GM10248 (cell line): ENCODE measurements at regions of chr2 and their contacts with region 1.

Region 1: GRCh38 chr2:208175069-208175839 is 11.9 kb upstream of the CRYGA start:
- DNase-seq: peak; percentile 79
- CTCF ChIP-seq: peak; percentile 86

Region 2: GRCh38 chr2:208153156-208153555 is 22.1 kb before region 1 on chr2:
- CTCF ChIA-PET with region 1: interaction called, 22 read pairs
- POLR2A ChIA-PET with region 1: no interaction called
- DNase-seq: no peak
- CTCF ChIP-seq: no peak

Region 3: GRCh38 chr2:208164951-208165755 is 10.1 kb before region 1 on chr2:
- CTCF ChIA-PET with region 1: interaction called, 17 read pairs
- POLR2A ChIA-PET with region 1: no interaction called
- DNase-seq: no peak
- CTCF ChIP-seq: no peak

Region 4: DNA sequence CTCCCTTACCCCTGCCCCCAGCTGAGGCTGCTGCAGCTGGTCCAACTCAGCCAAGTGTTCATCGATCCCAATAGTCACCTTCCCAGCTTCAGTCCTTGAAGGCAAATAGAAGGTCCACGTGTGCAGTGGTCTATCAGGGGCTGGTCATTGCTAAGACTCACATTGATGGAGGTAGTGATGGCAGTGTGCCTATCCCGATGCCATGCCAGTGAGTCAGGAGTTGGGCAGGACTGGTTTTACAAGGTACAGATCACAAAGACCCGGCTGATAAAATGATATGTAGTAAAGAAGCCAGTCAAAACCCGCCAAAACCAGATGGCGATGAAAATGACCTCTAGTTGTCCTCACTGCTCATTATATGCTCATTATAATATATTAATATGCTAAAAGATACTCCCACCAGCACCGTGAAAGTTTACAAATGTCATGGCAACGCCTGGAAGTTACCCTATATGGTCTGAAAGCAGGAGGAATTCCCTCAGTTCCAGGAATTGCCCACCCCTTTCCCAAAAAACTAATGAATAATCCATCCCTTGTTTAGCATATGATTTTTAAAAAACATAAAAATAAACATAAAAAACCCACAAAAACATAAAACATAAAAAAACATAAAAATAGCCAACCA is 17.5 kb after region 1 on chr2:
- CTCF ChIA-PET with region 1: interaction called, 12 read pairs
- POLR2A ChIA-PET with region 1: no interaction called
- DNase-seq: no peak
- CTCF ChIP-seq: no peak